Endothelial cell of umbilical vein (primary cell): ENCODE measurements at regions of chr1 and their contacts with region 1.

Region 1: DNA sequence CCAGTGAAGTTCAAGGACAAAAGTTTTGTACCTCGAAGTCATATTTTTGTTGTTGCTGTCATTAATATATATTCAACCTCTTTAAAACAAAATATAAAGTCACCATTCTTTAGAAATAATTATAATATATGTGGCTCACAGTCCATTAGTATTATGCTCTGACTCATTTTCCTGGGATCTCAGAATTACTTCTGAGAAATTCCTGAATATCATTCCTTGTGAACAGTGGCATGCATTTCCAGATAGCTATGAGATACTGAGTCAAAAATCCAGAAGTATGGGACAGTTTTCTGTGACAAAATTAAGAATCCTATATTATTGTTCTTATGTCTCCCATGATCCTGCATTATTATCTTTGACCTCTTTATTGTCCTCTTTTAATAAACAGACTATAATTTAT is 13.8 kb upstream of the RGS21 start:
- DNase-seq: no peak
- H3K4me3 ChIP-seq: no peak overlapping the region
- H3K27ac ChIP-seq: no peak overlapping the region
- H3K4me1 ChIP-seq: no peaks in the 10 kb centered on the region
- H3K27me3 ChIP-seq: no peaks in the 10 kb centered on the region
- CTCF ChIP-seq: no peak
- POLR2A ChIP-seq: no peak

Region 2: GRCh38 chr1:191831572-191831971 is 471.5 kb before region 1 on chr1:
- CTCF ChIA-PET with region 1: no interaction called
- POLR2A ChIA-PET with region 1: no interaction called
- dilution Hi-C with region 1: no loop called
- intact Hi-C with region 1: loop called (anchors 10 kb)
- DNase-seq: peak; percentile 7
- H3K4me3 ChIP-seq: no peak overlapping the region
- H3K27ac ChIP-seq: no peak overlapping the region
- H3K4me1 ChIP-seq: no peaks in the 10 kb centered on the region
- H3K27me3 ChIP-seq: no peaks in the 10 kb centered on the region
- CTCF ChIP-seq: no peak
- POLR2A ChIP-seq: no peak

Region 3: GRCh38 chr1:191984856-191985255 is 318.2 kb before region 1 on chr1:
- CTCF ChIA-PET with region 1: no interaction called
- POLR2A ChIA-PET with region 1: no interaction called
- dilution Hi-C with region 1: no loop called
- intact Hi-C with region 1: no loop called
- DNase-seq: no peak
- H3K4me3 ChIP-seq: no peak overlapping the region
- H3K27ac ChIP-seq: no peak overlapping the region
- H3K4me1 ChIP-seq: no peaks in the 10 kb centered on the region
- H3K27me3 ChIP-seq: no peaks in the 10 kb centered on the region
- CTCF ChIP-seq: no peak
- POLR2A ChIP-seq: no peak

Region 4: DNA sequence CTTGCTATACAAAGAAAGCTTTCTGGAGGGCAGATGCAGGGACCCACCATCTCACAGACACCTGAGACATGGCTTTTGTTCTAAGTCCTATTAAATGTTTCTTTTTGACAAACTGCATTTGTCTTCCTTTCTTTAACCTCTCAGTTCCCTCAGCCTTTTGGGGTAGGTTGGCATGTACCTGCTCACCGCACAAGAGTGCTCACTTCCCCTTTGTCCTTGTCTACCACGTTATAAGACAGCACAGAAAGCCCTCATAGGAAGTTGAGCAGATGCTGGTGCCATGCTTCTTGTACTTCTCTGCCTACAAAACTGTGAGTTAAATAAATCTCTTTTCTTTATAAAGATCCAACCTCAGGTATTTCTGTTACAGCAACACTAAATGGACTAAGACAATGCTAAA is 18.1 kb before region 1 on chr1:
- CTCF ChIA-PET with region 1: no interaction called
- POLR2A ChIA-PET with region 1: no interaction called
- dilution Hi-C with region 1: no loop called
- intact Hi-C with region 1: no loop called
- DNase-seq: no peak
- H3K4me3 ChIP-seq: no peak overlapping the region
- H3K27ac ChIP-seq: no peak overlapping the region
- H3K4me1 ChIP-seq: no peaks in the 10 kb centered on the region
- H3K27me3 ChIP-seq: no peaks in the 10 kb centered on the region
- CTCF ChIP-seq: no peak
- POLR2A ChIP-seq: no peak